Activated naive CD4-positive, alpha-beta T cell treated with anti-CD3 and anti-CD28 coated beads for 36 hours (primary cell): ENCODE measurements at regions of chr1 and their contacts with region 1.

Region 1: GRCh38 chr1:50873458-50874187 is 86.4 kb downstream of the FAF1 start:
- DNase-seq: peak; percentile 82
- H3K4me3 Mint-ChIP-seq: no peak overlapping the region
- H3K27ac Mint-ChIP-seq: no peak overlapping the region
- H3K4me1 Mint-ChIP-seq: peaks cover 8% of the 10 kb centered on the region
- H3K27me3 Mint-ChIP-seq: no peaks in the 10 kb centered on the region

Region 2: DNA sequence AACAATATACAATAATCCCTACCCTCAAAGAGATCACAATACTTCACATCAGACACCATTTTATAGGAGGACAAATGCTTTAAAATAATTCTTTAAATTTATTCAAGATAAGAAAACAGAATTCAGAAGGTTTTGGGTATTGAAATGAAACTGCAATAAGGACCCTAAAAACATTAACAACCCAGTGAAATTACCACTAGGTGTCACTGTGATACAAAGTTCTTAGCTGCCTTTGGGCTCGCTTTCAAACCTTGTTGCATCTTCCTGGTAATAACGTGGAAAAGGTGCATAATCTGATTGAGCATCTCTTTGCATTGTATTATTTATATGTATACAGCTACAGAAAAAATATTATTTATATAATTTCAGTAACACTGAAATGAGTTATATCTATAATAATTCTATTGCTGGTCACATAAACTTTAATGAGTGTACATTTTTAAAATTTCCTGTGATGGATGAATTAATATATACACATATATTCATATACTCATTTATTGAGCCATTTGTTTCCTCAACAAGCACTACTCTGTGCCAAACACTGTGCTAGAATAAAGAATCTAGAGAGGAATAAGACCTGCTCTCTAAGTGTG is 98.8 kb before region 1 on chr1:
- CTCF ChIA-PET with region 1: no interaction called
- intact Hi-C with region 1: loop called (anchors 1 kb)
- DNase-seq: peak; percentile 8
- H3K4me3 Mint-ChIP-seq: no peak overlapping the region
- H3K27ac Mint-ChIP-seq: no peak overlapping the region
- H3K4me1 Mint-ChIP-seq: peaks cover 7% of the 10 kb centered on the region
- H3K27me3 Mint-ChIP-seq: no peaks in the 10 kb centered on the region

Region 3: GRCh38 chr1:50942334-50942733 is 68.7 kb after region 1 on chr1:
- CTCF ChIA-PET with region 1: no interaction called
- intact Hi-C with region 1: no loop called
- DNase-seq: no peak
- H3K4me3 Mint-ChIP-seq: no peak overlapping the region
- H3K27ac Mint-ChIP-seq: no peak overlapping the region
- H3K4me1 Mint-ChIP-seq: peaks cover 14% of the 10 kb centered on the region
- H3K27me3 Mint-ChIP-seq: no peaks in the 10 kb centered on the region

Region 4: GRCh38 chr1:50978144-50978851 is 104.7 kb after region 1 on chr1:
- CTCF ChIA-PET with region 1: interaction called, 3 read pairs
- intact Hi-C with region 1: loop called (anchors 5 kb)
- DNase-seq: peak; percentile 27
- H3K4me3 Mint-ChIP-seq: peak overlapping the region; percentile 62
- H3K27ac Mint-ChIP-seq: no peak overlapping the region
- H3K4me1 Mint-ChIP-seq: peaks cover 18% of the 10 kb centered on the region
- H3K27me3 Mint-ChIP-seq: peaks cover 38% of the 10 kb centered on the region

Region 5: DNA sequence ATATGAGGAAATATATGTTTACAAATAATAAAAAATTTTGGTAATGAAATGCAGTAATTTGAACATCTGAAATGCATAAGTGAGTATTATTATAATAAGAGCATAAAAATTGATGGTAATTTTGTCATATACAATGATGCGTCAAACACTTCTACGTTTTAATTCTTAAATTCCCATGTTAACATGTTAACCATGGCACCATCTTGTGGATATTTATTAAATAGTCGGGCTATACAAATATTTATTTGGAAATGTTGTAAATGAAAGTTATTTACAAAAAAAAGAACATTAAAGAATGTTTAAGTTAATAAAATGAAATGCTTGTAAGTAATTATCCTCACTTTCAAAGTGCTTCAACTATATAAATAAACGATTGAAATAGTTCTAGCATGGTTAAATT is 171.2 kb after region 1 on chr1:
- CTCF ChIA-PET with region 1: no interaction called
- intact Hi-C with region 1: loop called (anchors 1 kb)
- DNase-seq: no peak
- H3K4me3 Mint-ChIP-seq: no peak overlapping the region
- H3K27ac Mint-ChIP-seq: no peak overlapping the region
- H3K4me1 Mint-ChIP-seq: no peaks in the 10 kb centered on the region
- H3K27me3 Mint-ChIP-seq: no peaks in the 10 kb centered on the region